ENCODE measurements at regions of chr2 and their contacts with region 1.

Region 1: DNA sequence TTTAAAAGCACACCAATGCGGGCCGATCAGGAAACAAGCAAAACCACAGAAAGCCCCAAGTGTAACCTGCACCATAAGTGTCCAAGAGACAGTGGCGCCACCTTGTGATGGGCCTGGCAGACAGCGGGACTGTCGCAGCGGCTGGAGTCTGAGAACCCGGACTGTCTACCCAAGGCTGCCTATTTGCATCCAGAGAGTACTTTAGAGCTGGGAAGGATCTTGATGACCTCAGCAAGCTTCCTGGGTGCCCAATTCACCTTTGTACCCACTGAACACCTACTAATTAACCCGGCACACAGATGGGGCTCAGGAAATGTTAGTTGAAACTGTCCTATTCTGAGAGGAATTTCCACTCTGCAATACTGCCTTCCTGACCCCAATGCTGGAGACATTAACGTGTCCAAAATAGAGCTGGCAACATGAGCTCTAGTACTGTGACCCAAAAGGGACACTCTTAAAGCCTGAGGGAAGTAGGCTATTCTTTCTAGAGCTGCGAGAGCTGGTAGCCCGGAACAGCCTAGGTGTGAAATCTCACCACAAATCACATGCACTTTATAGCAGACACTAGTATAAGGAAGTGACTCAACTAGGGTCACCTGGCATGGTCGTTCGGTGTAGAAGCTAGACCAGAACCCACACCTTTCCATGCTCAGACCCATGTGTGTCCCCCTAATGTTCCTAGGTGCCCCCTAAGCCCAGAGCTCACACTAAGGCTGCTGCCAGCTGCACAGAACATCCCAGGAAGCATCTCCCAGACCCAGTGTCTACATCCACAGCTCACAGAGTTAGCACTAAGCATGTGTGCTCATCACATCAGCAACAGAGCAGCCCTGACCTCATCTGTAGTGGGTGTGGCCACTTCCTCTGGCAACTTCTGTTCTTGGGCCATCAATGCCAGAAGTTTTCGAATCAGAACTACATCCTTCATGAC is 25.4 kb downstream of the POLR1A start:
- DNase-seq: no peak
- H3K4me3 ChIP-seq: no peak overlapping the region
- CTCF ChIP-seq: peak; percentile 88

Region 2: GRCh38 chr2:85635636-85636035 is 444.6 kb before region 1 on chr2:
- CTCF ChIA-PET with region 1: interaction called, 14 read pairs
- POLR2A ChIA-PET with region 1: no interaction called
- DNase-seq: no peak
- H3K4me3 ChIP-seq: no peak overlapping the region
- CTCF ChIP-seq: no peak

Region 3: DNA sequence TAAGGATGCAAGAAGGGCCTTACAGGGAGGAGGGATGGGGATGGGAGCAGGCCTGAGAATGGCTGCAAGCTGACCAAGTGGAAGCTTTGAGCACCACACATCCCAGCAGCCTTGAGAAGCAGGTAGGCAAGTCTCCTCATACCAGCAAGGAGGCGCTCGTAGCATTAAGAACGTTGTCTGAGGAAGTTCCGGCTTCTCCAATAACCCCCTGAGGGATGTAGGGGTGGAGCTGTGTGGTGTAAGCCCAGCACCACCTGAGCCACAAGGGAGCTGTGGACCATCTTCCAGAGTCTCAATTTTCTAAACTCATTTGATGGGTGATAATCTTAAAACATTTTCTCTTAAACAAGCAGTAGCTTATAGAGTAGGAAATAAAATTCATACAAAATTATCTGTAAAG is 242.1 kb before region 1 on chr2:
- CTCF ChIA-PET with region 1: interaction called, 891 read pairs
- POLR2A ChIA-PET with region 1: interaction called, 3 read pairs
- DNase-seq: no peak
- H3K4me3 ChIP-seq: no peak overlapping the region
- CTCF ChIP-seq: no peak

Region 4: GRCh38 chr2:85852937-85853498 is 227.2 kb before region 1 on chr2:
- CTCF ChIA-PET with region 1: interaction called, 14 read pairs
- POLR2A ChIA-PET with region 1: no interaction called
- DNase-seq: no peak
- H3K4me3 ChIP-seq: peak overlapping the region; percentile 38
- CTCF ChIP-seq: no peak

Region 5: GRCh38 chr2:85888684-85889626 is 191.3 kb before region 1 on chr2 and contains the start of gene ST3GAL5:
- CTCF ChIA-PET with region 1: interaction called, 100 read pairs
- POLR2A ChIA-PET with region 1: interaction called, 3 read pairs
- DNase-seq: no peak
- H3K4me3 ChIP-seq: peak within 1 kb of the TSS; percentile 64
- CTCF ChIP-seq: peak; percentile 85

Region 6: DNA sequence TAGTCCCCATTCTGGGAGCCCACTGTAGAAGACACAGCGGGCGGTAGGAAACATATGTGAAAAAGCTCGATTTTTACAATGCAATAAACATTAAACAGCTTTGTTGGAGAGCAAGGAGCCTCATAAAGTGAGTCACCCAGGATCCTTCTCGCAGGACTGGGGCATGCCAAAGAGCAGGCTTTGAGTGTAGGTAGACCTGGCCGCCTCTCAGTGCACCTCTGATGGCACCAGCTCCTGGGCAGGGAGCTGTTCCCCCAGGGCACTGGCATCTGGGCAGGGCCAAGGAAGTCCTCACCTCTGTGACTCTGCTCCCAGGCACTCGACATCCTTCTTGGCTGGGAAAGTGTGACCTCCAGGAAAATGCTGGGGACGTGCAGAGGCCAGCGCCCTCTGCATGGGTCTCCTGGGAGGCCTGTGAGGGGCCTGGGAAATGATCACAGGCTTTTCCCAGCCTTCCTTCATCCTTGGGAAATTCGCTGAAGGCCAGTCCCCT is 68.8 kb before region 1 on chr2:
- CTCF ChIA-PET with region 1: no interaction called
- POLR2A ChIA-PET with region 1: no interaction called
- DNase-seq: no peak
- H3K4me3 ChIP-seq: no peak overlapping the region
- CTCF ChIP-seq: no peak

Region 7: GRCh38 chr2:86062043-86062442 is 18.2 kb before region 1 on chr2:
- CTCF ChIA-PET with region 1: interaction called, 31 read pairs
- POLR2A ChIA-PET with region 1: no interaction called
- DNase-seq: no peak
- H3K4me3 ChIP-seq: no peak overlapping the region
- CTCF ChIP-seq: no peak

Region 8: DNA sequence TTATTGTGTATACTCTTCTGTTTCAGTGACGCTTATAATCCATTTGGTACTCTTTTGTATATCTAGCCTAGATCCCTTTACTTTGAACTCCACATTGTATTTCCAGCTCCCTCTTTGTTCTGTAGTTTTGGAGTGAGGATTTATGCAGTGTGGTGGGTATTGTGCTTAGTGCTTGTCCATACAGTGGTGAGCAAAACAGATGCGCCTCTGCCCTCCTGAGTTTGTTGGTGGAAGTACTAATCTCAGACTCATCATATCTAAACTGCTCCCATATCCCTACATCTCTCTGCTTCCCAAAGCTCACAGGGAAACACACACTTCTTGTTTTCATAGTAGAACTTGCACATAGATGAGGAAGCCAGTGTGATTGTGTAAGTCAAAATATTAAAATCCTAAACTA is 37.9 kb after region 1 on chr2:
- CTCF ChIA-PET with region 1: interaction called, 10 read pairs
- POLR2A ChIA-PET with region 1: no interaction called
- DNase-seq: no peak
- H3K4me3 ChIP-seq: no peak overlapping the region
- CTCF ChIP-seq: no peak

Region 9: GRCh38 chr2:86298411-86299379 is 218.4 kb after region 1 on chr2:
- CTCF ChIA-PET with region 1: no interaction called
- POLR2A ChIA-PET with region 1: no interaction called
- DNase-seq: no peak
- H3K4me3 ChIP-seq: no peak overlapping the region
- CTCF ChIP-seq: no peak